Cardiac septum (tissue), 1 donor: ENCODE measurements at regions of chr10 and their contacts with region 1.

Region 1: GRCh38 chr10:24118246-24118645 is 90.7 kb upstream of the KIAA1217 start:
- DNase-seq: no peak

Region 2: GRCh38 chr10:24008164-24009091 is 109.8 kb before region 1 on chr10:
- intact Hi-C with region 1: loop called (anchors 10 kb)
- DNase-seq: no peak